BJ (cell line): ENCODE measurements at regions of chr18 and their contacts with region 1.

Region 1: DNA sequence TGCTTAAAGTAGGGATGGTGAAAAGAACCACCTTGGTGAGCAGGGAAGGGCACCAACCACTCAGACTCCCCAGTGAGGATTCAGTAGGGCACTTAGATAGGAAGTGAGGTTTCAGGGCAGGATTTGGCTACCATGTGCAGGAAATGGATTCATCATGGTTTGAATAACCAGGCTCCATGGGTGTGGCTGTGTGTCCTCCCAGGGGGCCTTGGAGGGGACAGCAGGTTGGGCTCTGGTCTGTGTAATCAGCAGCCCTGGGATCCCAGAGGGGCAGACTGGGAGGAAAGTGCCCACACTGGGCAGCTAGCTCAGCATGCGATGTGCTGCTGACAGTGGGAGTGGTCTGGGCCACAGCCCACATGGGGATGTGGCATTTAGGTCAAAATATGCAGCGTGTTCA is 224.6 kb downstream of the CELF4 start:
- DNase-seq: no peak
- H3K4me3 ChIP-seq: no peak overlapping the region
- H3K27me3 ChIP-seq: peaks cover 2% of the 10 kb centered on the region; the same call in 1 of the 2 replicates
- CTCF ChIP-seq: no peak

Region 2: DNA sequence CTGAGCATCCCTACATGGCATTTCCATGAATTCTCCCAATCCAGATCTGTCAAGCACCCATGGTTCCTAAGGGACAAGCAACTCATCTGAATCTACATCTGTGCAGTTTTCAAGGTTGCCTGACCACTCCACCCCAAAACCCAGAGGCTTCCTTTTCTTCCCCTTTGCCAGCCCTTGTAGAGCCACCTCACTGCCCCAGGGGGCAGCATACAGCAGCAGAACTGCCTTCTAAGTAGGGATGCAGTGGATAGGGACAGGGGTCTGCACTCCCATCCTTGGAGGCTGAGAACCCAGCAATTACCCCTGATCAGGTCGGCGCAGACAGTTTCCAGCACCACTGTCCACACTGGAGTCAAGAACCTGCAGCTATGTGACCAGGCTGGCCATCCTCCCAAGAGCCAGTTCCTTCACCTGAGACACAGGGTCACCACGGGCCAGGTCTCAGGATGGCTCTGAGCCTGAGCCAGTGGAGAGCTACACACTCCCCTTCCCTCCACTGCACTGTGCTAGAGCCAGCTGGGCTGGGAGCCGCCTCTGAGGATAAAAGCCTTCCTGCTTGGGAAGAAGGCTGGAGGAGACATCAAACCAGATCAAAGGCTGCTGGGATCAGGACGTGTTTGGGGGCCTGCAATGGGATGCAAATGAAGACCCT is 58.5 kb before region 1 on chr18:
- CTCF ChIA-PET with region 1: no interaction called
- POLR2A ChIA-PET with region 1: no interaction called
- DNase-seq: no peak
- H3K4me3 ChIP-seq: no peak overlapping the region
- H3K27me3 ChIP-seq: peaks cover under 1% of the 10 kb centered on the region
- CTCF ChIP-seq: peak; percentile 44

Region 3: DNA sequence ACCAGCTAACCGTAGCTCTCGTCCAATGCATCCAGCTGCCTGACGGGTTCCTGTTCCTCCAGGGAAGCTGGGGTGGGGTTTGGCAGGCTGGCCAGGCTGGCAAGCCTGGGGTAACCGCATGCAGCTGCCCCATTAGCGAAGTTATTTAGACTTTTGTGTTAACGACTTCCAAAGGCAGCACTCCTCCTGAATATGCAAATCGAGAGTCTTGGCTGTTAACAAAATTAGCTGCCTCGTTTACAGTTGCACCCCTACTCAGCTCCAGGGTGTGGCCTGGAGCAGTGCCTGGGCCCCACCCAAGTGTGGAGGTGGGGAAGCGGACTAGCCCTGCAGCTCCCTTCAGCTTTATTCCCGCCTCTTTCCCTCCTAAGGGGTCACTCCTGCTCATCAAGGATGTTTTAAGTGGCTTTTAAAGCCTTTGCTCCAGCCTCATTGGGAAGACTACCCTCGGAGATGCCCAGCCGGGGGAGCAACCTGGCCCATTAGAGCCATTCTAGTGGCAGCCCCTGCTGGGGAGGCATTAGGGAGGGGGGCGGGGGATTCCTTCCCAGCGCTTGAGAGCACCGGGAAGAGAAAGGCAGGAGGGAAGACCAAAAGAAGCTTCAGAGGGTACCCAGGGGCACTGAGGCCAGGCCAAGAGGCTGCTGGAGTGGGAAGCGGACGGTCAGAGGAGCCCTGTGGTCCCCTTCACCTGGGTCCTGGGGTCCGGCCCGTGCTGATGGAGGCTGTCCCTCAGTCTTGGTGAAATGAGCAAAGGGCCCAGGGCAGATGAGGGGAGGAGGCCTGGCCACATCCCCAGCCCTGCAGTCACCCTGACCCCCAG is 20.5 kb after region 1 on chr18:
- CTCF ChIA-PET with region 1: interaction called, 11 read pairs
- POLR2A ChIA-PET with region 1: no interaction called
- DNase-seq: no peak
- H3K4me3 ChIP-seq: no peak overlapping the region
- H3K27me3 ChIP-seq: peaks cover 8% of the 10 kb centered on the region
- CTCF ChIP-seq: no peak

Region 4: DNA sequence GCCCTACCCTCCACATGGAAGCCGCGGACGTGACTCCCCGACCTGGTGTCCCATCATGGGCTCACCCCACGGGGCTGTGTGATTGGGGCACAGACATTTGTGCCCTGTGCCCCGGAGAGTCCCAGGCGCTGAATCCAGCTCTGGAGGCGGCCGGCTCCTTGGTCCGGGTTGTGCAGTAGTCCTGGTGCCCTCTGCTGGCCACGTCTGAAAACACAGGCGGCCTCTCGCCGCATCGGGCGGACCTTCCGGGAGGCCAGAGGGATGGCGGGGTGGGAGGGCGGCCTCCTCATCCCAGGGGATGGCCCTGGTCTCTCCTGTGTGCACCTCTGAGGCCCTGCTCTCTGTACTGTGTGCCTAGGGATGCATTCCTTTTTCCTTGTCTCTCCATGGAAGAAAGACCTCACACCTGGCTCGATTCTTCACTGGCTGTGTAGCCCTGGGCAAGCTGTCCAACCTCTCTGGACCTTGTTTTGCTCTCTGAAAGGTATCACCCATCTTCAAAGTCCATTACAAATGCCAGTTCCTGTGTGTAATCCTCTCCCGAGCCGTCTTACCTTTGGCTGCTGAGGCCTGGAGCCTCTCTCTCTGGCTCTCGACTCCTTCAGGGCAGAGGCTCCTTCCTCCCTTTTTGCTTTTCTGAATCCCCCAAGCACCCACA is 197.0 kb after region 1 on chr18:
- CTCF ChIA-PET with region 1: interaction called, 38 read pairs
- POLR2A ChIA-PET with region 1: no interaction called
- DNase-seq: no peak
- H3K4me3 ChIP-seq: no peak overlapping the region
- H3K27me3 ChIP-seq: peaks cover 11% of the 10 kb centered on the region
- CTCF ChIP-seq: peak; percentile 95